ENCODE measurements at regions of chr2 and their contacts with region 1.

Region 1: DNA sequence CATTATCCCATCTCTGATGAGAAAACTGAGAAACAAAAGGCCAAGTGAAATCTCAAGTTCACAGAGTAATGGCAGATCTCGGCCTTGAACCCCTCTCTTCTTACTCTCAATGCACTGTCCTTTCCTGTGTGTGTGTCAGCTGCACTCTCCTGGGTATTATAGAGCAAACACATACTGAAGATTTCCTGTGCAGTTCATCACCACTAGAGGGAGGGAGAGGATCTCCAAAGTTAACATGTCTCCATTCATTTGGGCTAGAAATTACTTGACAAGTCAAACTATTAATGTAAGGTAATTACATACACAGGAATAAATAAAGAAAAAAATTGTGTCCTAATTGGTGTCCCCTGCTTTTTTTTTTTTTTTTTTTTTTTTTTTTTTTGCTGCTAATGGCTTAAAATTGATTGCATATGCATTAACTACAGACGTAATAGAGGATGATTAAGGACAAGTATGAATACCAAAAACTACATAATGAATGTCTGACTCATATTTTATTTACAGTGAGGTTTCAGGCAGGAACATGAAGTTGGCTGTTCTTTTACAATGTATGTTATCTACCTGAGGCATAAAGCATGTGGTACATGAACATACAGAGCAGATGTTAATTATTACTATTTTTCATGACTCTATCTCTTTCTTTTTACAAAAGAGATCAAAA is 269.2 kb downstream of the NYAP2 start:
- DNase-seq: no peak
- H3K4me3 Mint-ChIP-seq: no peak overlapping the region
- H3K27ac Mint-ChIP-seq: no peak overlapping the region
- H3K4me1 Mint-ChIP-seq: no peaks in the 10 kb centered on the region
- H3K27me3 Mint-ChIP-seq: peaks cover 5% of the 10 kb centered on the region

Region 2: DNA sequence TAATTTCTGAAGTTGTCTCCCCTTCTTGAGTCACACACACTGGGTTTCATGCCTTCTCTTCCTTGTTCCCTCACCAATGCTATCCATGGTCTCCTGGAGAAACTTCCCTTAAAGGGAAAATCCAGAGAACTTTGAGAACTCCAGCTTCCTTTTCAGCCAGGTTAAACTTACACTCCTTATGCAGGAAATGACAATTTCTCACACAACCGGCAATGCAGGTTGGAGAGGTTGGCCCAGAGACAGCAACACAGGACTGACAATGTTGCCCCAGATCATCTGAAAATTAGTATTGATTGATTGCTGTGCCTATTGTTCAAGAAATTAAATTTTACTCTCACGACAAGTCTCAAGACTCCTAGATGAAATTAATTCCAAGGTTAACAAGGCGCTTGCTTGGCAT is 23.0 kb after region 1 on chr2:
- intact Hi-C with region 1: no loop called
- DNase-seq: no peak
- H3K4me3 Mint-ChIP-seq: no peak overlapping the region
- H3K27ac Mint-ChIP-seq: no peak overlapping the region
- H3K4me1 Mint-ChIP-seq: no peaks in the 10 kb centered on the region
- H3K27me3 Mint-ChIP-seq: no peaks in the 10 kb centered on the region

Region 3: DNA sequence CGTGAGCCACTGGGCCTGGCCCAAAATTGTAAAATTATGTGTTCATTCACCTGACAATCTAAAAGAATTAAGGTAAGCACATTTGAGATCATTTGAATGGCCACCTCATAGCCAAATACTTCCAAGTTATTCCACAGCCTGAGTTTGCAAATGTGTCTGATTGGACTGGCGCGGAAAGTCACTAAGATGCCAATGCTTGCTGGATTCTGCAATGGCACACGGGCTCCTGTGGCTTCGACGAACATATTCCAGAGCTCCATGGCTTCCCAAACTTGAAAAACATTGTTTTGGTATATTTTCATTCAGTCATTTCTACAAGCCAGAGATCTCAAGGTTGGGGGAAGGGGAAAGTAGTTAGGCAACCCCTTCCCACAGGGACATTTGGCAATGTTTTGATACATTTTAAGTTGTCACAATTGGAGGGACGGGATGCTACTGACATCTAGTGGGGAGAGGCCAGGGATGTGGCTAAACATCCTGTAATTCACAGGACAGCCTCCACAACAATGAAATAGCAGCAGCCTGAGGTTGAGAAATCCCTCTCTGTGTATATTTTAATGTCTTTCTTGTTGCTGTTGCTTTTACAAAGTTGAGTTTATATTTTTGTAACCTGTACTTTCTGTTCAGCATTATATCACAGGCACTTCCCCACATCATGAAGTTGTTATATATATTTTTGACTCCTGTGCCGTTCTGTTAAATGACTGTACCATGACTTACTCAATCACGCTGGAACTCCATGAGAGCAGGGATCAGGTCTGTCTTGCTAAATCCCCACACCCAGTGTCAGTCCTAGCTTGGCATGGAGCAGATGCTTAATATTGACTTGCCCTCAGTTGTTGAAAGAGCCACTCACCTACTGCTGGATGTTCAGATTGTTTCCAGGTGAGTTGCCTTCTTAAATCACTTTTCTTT is 1438.4 kb after region 1 on chr2:
- intact Hi-C with region 1: loop called (anchors 1 kb)
- DNase-seq: no peak
- H3K4me3 Mint-ChIP-seq: no peak overlapping the region
- H3K27ac Mint-ChIP-seq: no peak overlapping the region
- H3K4me1 Mint-ChIP-seq: no peaks in the 10 kb centered on the region
- H3K27me3 Mint-ChIP-seq: no peaks in the 10 kb centered on the region

Region 4: GRCh38 chr2:227238238-227239237 is 1569.8 kb after region 1 on chr2:
- intact Hi-C with region 1: loop called (anchors 1 kb)
- DNase-seq: peak; percentile 13
- H3K4me3 Mint-ChIP-seq: no peak overlapping the region
- H3K27ac Mint-ChIP-seq: no peak overlapping the region
- H3K4me1 Mint-ChIP-seq: no peaks in the 10 kb centered on the region
- H3K27me3 Mint-ChIP-seq: peaks cover 4% of the 10 kb centered on the region

Measured in activated T-helper 1 cell treated with anti-CD3 and anti-CD28 coated beads, Interleukin-12 subunit alpha, Interleukin-12 subunit beta, Interleukin-2, Interleukin-4 antibody, amounts not matched to agents 30 ng/mL and 10 ng/mL and 1 ng/mL, durations not matched to agents 14 hours and 24 hours and 36 hours (primary cell).